Heart left ventricle (tissue), 16 donors: ENCODE measurements at regions of chr5 and their contacts with region 1.

Region 1: DNA sequence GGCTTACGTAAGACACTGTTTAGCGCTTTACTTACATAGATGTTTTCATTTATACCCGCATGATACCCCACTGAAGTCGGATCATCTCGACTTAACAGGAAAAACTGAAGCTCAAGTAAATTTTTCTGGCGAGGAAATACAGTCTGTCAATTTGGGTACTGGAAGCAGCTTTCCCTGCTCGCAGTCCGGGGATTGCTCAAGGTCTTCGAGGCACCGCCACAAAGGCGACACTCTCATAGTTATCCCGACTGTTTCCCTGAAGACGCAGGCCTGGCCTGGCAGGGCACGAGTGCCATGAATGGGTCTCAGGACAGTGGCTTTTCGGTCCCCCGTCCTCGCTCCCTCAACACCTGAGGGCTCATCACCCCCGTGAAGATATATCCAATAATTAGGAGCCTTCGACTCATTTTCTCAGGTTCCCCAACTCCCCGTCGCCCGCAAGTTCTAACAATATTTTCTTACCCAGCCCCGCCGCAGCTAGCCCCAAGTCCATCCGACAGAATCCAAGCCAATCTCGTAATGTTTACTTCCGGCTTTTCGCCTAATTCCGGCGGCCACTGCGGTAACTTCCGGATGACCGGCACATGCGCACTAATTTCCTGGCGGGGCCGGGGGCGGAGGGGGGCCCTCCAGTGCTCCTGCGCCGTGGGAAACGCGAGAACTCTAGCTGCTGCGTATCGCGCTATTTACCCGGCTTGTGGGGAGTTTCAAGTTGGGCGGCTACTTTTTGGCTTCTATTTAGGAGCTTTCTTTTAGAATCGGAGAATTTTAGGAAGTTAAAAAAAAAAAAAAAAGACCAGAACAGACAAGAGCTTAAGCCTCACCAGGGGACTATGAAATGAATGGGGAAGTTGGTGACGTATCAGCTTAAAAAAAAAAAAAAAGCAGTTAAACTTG is at the start of gene SLU7:
- DNase-seq: peak; percentile 94 to 96 (median 95)
- ATAC-seq: peak; percentile 94 to 96 (median 94)
- H3K4me3 ChIP-seq: peak within 1 kb of the TSS; percentile 61 to 94 (median 80)
- H3K27ac ChIP-seq: peak within 1 kb of the TSS; percentile 64 to 96 (median 88)
- H3K4me1 ChIP-seq: peaks cover 0 to 56% (median 26%) of the 10 kb centered on the region in 12 donors
- H3K27me3 ChIP-seq: no peaks in the 10 kb centered on the region
- CTCF ChIP-seq: peak in 1 of 12 donors; percentile 9
- POLR2A ChIP-seq: peak in 1 of 2 donors; percentile 67
- total RNA-seq, gene SLU7: 39.7 to 81.6 (median 49.7) TPM

Region 2: DNA sequence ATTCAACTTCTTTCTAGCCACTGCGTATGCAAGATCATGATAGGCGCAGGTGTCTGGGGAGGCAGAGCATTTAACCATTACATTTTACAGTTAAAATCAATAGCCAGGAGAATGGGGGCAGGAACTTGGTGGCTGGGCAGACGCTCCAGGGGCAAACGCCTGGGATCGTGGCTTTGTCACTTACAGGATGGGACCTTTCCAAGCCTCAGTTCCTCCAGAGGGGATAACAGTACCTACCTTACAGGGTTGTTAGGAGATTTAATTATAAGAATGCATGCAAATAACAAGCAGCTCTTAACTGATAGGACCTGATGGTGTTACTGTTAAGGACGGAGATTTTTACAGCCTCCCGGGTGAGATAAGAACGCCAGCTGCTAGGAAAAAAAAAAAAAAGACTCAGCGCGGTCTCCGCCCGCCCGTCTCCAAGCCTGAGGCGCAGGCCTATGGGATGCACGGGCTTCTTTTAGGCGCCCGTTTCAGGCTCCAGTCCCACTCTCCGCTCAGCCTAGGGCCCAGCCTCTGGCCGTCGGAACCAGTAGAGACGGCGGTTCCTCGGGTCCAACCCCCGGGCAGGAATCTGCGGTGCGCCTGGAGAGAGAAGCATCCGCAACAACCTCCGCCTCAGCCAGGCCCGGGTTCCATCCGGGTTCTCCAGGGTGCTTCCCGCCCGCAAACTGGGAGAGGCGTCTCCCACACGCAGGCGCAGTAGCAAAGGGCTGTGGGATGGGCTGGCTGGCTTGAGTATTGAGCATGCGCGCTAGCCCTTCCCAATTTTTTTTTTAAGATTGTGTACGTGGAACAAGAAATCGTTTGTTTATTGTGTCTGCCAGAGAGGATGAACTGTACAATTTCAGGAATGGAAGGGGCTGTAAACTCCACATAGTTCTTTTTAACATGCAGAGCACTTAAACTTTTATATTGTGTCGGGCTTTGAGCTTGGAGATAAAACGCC is 19.1 kb before region 1 on chr5 and contains the start of gene FAM200C:
- intact Hi-C with region 1: loop called in 2 of 10 experiments (anchors 1 to 2 kb)
- DNase-seq: peak; percentile 92 to 96 (median 95)
- ATAC-seq: peak; percentile 96 to 99 (median 98)
- H3K4me3 ChIP-seq: peak within 1 kb of the TSS; percentile 36 to 89 (median 72)
- H3K27ac ChIP-seq: peak within 1 kb of the TSS; percentile 56 to 91 (median 86)
- H3K4me1 ChIP-seq: peaks cover 0 to 32% (median 28%) of the 10 kb centered on the region in 12 donors
- H3K27me3 ChIP-seq: no peaks in the 10 kb centered on the region
- CTCF ChIP-seq: no peak
- POLR2A ChIP-seq: peak in 1 of 2 donors; percentile 95
- total RNA-seq, gene FAM200C: 2.2 to 5.0 (median 3.4) TPM